HEK293 (cell line): ENCODE measurements at regions of chr16 and their contacts with region 1.

Region 1: GRCh38 chr16:46607529-46607928 is 13.7 kb downstream of the SHCBP1 start:
- H3K4me3 ChIP-seq: no peak overlapping the region
- H3K27ac ChIP-seq: no peak overlapping the region
- H3K4me1 ChIP-seq: no peaks in the 10 kb centered on the region
- CTCF ChIP-seq: no peak

Region 2: DNA sequence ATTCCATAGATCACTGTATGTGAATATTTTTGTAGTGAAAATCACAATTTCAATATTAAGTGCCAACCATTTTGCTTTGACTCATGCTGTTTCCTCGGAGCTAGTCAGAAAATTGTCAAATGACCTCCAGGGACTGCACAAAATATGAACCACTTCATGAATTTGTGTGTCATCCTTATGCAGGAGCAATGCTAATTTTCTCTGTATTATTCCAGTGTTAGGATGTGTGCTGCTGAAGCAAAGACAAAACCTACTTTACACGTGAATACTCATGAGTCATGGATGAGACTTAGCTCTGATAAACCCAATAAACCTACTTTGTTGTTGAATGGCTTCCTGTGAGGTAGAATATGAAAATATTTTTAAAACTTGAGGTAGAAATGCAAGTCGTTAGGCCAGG is 51.6 kb before region 1 on chr16:
- CTCF ChIA-PET with region 1: interaction called, 48 read pairs
- POLR2A ChIA-PET with region 1: no interaction called
- H3K4me3 ChIP-seq: no peak overlapping the region
- H3K27ac ChIP-seq: no peak overlapping the region
- H3K4me1 ChIP-seq: no peaks in the 10 kb centered on the region
- CTCF ChIP-seq: no peak

Region 3: DNA sequence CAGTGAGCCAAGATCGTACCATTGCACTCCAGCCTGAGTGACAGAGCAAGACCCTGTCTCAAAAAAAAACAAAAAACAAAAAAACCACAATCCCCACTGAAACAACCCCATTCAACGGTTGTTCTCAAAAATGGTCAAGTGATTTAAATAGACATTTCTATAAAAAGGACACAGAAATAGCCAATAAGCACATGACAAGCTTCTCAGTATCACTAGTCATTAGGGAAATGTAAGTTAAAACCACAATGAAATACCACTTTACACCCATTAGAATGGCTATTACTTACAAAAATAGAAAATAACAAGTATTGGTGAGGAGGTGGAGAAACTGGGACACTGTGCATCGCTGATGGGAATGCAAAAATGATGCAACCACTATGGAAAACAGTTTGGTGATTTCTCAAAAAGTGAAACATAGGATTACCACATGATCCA is 167.2 kb after region 1 on chr16:
- CTCF ChIA-PET with region 1: no interaction called
- POLR2A ChIA-PET with region 1: no interaction called
- H3K4me3 ChIP-seq: no peak overlapping the region
- H3K27ac ChIP-seq: no peak overlapping the region
- H3K4me1 ChIP-seq: no peaks in the 10 kb centered on the region
- CTCF ChIP-seq: no peak

Region 4: GRCh38 chr16:46871587-46871986 is 264.1 kb after region 1 on chr16:
- CTCF ChIA-PET with region 1: no interaction called
- POLR2A ChIA-PET with region 1: no interaction called
- H3K4me3 ChIP-seq: no peak overlapping the region
- H3K27ac ChIP-seq: no peak overlapping the region
- H3K4me1 ChIP-seq: no peaks in the 10 kb centered on the region
- CTCF ChIP-seq: no peak